ENCODE measurements at regions of chr10 and their contacts with region 1.

Region 1: GRCh38 chr10:20147684-20148083 is 331.5 kb downstream of the PLXDC2 start:
- DNase-seq: peak; percentile 52
- H3K4me3 ChIP-seq: no peak overlapping the region
- H3K27ac ChIP-seq: peak overlapping the region; percentile 74
- H3K4me1 ChIP-seq: peaks cover 42% of the 10 kb centered on the region
- H3K27me3 ChIP-seq: no peaks in the 10 kb centered on the region
- CTCF ChIP-seq: no peak

Region 2: DNA sequence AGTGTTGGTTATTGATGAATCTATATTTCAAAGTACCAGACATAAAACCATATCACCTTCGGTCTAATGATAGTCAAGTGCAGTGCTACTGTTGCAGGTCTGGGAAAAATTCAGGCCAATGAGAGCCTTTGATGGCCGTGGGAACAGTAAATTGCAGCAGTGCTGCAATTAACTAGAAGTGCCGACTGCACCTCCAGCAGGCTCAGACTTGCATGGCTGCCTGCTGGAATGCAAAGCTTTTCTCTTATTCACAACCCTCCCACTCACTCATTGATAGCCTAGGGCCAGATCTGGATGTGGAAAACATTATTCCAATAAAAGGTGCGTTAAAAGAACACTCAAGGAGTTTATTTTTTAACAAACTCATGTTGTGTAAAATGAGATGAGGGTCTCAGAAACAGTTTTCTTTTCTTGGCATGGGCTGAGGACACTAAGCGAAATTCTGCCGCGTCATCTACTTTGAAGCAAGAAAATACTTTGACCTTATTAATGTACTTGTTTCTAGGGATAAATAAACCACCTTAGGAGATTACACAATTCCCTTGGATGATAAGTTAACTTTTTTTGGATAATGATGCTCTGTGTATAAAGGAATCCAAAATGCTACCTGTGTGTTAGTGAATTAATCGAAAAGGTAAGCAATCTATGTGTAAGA is 314.4 kb before region 1 on chr10:
- CTCF ChIA-PET with region 1: no interaction called
- POLR2A ChIA-PET with region 1: no interaction called
- intact Hi-C with region 1: no loop called
- DNase-seq: peak; percentile 69
- H3K4me3 ChIP-seq: no peak overlapping the region
- H3K27ac ChIP-seq: peak overlapping the region; percentile 24
- H3K4me1 ChIP-seq: peaks cover 70% of the 10 kb centered on the region
- H3K27me3 ChIP-seq: no peaks in the 10 kb centered on the region
- CTCF ChIP-seq: no peak

Region 3: DNA sequence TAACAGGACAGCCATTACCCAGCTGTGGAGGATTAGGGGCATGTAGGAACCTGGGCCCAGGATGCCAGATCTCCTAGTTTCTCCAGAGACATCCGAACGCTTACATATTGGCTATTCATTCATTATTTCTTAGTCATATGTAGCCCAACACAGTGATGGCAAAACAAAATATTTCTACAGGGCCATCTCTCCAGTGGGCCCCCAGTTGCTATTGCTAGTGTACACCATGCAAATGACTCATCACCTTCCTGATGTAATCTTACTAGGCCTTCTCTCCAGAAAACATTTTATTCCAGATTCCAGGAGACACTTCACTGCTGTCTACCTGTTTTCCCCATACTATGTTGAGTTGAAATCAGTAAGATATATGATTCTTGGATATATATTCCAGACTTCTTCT is 129.7 kb before region 1 on chr10:
- CTCF ChIA-PET with region 1: no interaction called
- POLR2A ChIA-PET with region 1: no interaction called
- intact Hi-C with region 1: loop called (anchors 2 kb)
- DNase-seq: no peak
- H3K4me3 ChIP-seq: no peak overlapping the region
- H3K27ac ChIP-seq: peak overlapping the region; percentile 37
- H3K4me1 ChIP-seq: peaks cover 30% of the 10 kb centered on the region
- H3K27me3 ChIP-seq: no peaks in the 10 kb centered on the region
- CTCF ChIP-seq: no peak

Region 4: GRCh38 chr10:20406281-20407104 is 258.8 kb after region 1 on chr10:
- CTCF ChIA-PET with region 1: no interaction called
- POLR2A ChIA-PET with region 1: no interaction called
- intact Hi-C with region 1: loop called (anchors 10 kb)
- DNase-seq: peak; percentile 24
- H3K4me3 ChIP-seq: no peak overlapping the region
- H3K27ac ChIP-seq: no peak overlapping the region
- H3K4me1 ChIP-seq: peaks cover 28% of the 10 kb centered on the region
- H3K27me3 ChIP-seq: no peaks in the 10 kb centered on the region
- CTCF ChIP-seq: no peak

Measured in A673 (cell line).